Posterior cingulate gyrus (tissue), 11 donors: ENCODE measurements at regions of chr17 and their contacts with region 1.

Region 1: DNA sequence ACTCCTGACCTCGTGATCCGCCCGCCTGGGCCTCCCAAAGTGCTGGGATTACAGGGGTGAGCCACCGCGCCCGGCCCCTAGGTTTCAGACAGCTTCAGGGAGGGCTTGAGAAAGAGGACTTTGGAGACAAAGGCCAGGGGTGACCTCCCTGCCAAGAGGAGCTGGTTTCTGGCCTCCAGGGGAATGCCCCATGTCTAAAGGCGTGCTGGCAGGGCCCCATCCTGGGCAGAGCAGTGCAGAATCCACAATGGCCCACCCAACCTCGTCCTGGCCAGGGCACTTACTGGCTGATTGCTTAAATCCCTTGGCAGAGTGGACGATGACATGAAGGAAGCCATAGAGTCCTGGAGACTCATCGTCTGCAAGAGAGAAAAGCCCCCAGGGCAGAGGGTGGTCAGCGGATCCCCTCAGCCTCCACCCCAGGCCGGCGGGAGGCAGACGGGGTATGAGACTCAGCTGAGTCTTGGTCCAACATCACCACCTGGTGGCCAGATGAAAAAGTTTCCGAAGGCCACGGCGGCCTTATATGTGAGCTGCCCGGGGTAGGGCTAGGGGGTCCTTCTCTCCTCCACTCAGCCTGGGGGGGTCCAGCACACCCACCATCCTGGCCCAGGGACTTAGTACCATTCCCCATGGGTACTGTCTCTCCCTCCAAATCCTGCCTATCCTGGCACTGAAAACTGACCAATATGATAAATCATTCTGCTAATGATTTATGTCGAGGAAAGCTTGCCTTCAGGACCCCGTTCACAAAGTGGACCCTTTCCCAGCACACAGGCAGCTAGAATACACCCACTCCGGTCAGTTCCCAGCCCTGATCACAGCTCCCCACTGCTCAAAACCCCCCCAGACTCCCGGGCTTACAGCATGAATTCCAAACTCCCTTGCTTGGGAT is 59.1 kb downstream of the TIMM22 start:
- DNase-seq: peak; percentile 43 to 95 (median 73)

Region 2: DNA sequence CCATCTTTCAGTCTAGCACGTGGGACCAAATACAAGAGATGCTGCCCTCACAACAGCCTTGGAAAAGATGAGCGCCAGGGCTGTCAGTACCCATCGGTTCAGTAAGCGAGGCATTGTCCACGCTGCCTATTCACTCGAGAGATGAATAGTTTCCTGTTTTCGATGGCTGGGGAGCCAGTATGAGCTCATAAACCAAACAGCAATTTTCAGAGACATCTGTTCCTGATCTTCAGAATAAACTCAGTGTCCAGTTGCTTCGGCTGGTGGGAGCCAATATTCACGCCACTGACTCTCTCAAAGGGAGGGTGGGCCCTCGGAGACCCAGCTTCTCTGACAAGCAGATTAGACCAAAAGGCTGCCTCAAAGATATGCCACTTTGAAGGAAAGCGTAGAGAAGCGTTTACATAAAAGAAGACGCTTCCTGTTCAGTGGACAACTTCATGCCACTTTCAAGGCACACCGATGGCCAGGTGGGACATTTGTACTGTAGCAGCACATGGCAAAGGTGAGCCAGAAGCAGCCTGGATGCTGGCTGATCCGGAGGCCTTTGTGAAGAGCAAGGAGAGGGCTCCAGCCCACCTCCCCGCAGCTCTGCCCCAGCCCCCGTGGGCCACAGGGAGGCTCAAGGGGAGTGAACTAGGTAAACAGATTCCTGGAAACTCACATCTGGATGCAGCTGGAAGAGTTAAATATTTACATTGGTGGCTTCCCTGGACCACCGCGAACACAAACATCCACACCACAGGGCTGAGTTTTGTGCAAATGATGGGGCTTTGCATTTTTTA is 53.0 kb before region 1 on chr17:
- intact Hi-C with region 1: loop called (anchors 5 kb)
- DNase-seq: peak in 6 of 10 donors; percentile 47 to 86 (median 69)

Region 3: DNA sequence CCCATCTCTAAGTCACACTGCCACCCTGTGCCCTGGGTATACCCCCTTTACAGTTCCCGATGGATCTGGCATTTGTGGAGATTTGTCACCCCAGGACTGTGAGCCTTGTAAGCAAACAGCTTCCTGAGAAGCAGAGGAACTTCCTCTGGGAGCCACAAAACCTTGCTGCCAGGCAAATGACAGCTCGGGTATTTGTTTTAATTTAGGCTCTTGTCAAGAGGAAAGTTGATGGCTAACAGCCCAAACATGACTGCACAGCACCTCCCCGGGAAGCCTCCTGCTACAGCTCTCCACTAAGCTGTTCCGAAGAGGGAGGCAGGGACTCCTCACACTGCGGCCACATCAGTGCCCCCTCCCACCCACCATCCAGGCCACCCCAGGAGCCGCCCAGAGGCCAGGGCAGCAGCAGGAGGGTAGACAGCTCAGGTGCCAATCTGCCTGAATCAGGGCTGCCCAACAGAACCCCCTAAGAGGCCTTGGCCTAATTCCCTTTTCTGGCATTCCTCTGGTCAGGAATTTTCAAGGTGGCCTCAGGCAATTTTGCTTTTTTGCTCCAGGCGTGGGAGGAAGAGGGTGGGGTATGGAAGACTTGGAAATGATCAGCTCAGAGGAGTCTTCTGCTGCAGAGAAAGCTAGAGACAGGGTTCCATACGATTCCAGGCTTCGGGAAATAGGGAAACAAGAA is 121.2 kb after region 1 on chr17:
- intact Hi-C with region 1: no loop called
- DNase-seq: peak in 1 of 10 donors; percentile 88